H1 (cell line): ENCODE measurements at regions of chr1 and their contacts with region 1.

Region 1: GRCh38 chr1:177902266-177902665 is 67.6 kb downstream of the SEC16B start:
- DNase-seq: no peak
- H3K4me3 ChIP-seq: no peak overlapping the region
- H3K27ac ChIP-seq: no peak overlapping the region
- H3K4me1 ChIP-seq: no peaks in the 10 kb centered on the region
- H3K27me3 ChIP-seq: no peaks in the 10 kb centered on the region
- CTCF ChIP-seq: no peak
- EP300 ChIP-seq: no peak
- POLR2A ChIP-seq: no peak
- RAD21 ChIP-seq: no peak

Region 2: GRCh38 chr1:177913762-177914540 is 11.7 kb after region 1 on chr1:
- CTCF ChIA-PET with region 1: interaction called, 10 read pairs
- POLR2A ChIA-PET with region 1: no interaction called
- DNase-seq: peak in 1 of 2 experiments; percentile 57
- H3K4me3 ChIP-seq: no peak overlapping the region
- H3K27ac ChIP-seq: no peak overlapping the region
- H3K4me1 ChIP-seq: no peaks in the 10 kb centered on the region
- H3K27me3 ChIP-seq: no peaks in the 10 kb centered on the region; a peak in 1 of 7 replicates
- CTCF ChIP-seq: peak; percentile 69 to 84 (median 81)
- EP300 ChIP-seq: no peak
- POLR2A ChIP-seq: no peak
- RAD21 ChIP-seq: peak; percentile 84 to 85

Region 3: DNA sequence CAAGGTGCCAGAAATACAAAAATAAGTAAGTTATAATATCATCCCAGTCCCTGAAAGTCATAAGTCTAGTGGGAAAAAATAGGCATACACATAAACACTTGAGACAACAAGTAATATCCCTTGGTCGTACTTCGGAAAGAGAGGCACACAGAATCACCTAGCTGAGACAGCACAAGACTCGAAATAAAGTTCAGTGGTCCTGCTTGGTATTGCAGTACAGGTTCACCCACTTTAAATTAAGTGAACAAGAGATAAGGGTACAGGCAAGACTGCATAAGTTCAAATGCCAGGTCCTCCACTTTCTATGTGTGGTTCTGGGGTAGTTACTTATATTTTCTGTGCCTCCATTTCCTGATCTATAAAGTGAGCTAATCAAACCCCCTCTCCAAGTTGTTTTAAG is 19.9 kb after region 1 on chr1:
- CTCF ChIA-PET with region 1: interaction called, 52 read pairs
- POLR2A ChIA-PET with region 1: no interaction called
- DNase-seq: no peak
- H3K4me3 ChIP-seq: no peak overlapping the region
- H3K27ac ChIP-seq: no peak overlapping the region
- H3K4me1 ChIP-seq: peaks cover 0 to 6% (median 0%) of the 10 kb centered on the region in 4 experiments; a peak in 1 of 7 replicates
- H3K27me3 ChIP-seq: no peaks in the 10 kb centered on the region
- CTCF ChIP-seq: peak in 1 of 3 experiments; percentile 42; a peak in 2 of 4 replicates
- EP300 ChIP-seq: no peak
- POLR2A ChIP-seq: no peak
- RAD21 ChIP-seq: peak in 1 of 2 experiments; percentile 24; a peak in 2 of 4 replicates

Region 4: GRCh38 chr1:177928194-177928593 is 25.9 kb after region 1 on chr1:
- CTCF ChIA-PET with region 1: interaction called, 52 read pairs
- POLR2A ChIA-PET with region 1: no interaction called
- DNase-seq: no peak
- H3K4me3 ChIP-seq: no peak overlapping the region
- H3K27ac ChIP-seq: no peak overlapping the region
- H3K4me1 ChIP-seq: 0 out of 7 replicates have a peak, but pooled peaks cover 0 to 3% (median 0%) of the 10 kb centered on the region in 4 experiments
- H3K27me3 ChIP-seq: no peaks in the 10 kb centered on the region
- CTCF ChIP-seq: peak; percentile 26 to 58 (median 55)
- EP300 ChIP-seq: no peak
- POLR2A ChIP-seq: no peak
- RAD21 ChIP-seq: peak; percentile 52 to 59